MCF 10A (cell line): ENCODE measurements at regions of chr3 and their contacts with region 1.

Region 1: DNA sequence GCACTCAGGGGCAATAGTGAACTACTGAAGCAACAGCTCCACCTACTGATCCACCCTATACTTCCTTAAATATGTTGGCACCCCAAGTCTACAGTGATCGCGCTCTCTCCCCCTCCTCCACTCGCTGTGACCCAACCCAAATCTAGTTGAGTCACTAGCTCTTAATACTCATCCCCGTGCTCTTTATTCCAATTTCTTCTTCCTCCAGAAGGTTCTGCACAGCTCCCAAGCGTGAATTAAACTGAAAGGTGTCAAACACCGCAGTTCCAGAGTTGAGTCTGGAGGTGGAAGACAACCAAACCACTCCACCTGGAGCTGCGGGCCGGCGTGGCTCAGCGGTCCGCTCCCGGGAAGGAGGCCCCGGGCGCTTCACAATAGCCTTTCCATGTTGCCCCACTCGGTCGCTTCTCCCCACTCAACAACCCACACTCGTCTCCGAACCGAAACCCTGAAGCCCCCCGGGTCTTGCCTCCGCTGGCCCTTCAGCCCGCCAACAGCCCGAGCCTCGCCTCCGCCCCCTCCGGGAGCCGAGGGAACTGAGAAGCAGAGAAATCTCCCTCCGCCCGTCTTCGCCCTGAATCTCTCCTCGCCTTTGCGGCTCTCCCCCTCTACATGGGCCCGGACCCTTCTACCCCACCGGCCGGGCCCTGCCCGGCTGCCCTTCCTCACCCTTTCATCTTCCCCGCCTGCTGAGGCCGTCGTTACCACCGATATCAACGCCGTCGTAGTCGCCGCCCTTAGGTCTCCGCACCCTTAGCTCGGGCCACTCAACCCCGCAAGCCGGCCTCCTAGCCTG is 578 bp downstream of the NAA50 start:
- DNase-seq: peak; percentile 95
- H3K4me3 Mint-ChIP-seq: peak overlapping the region; percentile 94
- H3K27ac Mint-ChIP-seq: peak overlapping the region; percentile 100
- H3K4me1 Mint-ChIP-seq: peaks cover 49% of the 10 kb centered on the region
- H3K27me3 Mint-ChIP-seq: no peaks in the 10 kb centered on the region
- CTCF ChIP-seq: peak; percentile 39

Region 2: DNA sequence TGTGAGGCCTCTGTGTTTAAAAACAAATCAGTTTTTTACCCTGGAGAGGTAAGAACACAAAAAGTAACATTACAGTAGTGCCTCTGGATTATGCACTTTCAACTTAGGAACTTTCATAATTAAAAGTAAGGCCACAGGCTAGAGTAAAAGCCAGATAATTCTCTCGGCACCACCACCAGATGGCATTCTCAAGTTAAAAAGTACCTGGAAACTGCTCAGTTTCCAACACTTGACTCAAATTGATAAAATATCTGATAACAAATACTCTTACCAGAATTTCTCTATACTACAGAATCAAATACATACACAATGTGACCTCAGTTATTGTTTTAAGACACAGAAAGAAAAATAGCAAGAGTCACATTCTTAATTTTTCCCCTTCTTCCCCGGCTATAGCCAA is 250.4 kb before region 1 on chr3:
- CTCF ChIA-PET with region 1: interaction called, 22 read pairs
- POLR2A ChIA-PET with region 1: interaction called, 8 read pairs
- intact Hi-C with region 1: loop called (anchors 1 kb)
- DNase-seq: peak; percentile 39
- H3K4me3 Mint-ChIP-seq: no peak overlapping the region
- H3K27ac Mint-ChIP-seq: no peak overlapping the region
- H3K4me1 Mint-ChIP-seq: no peaks in the 10 kb centered on the region
- H3K27me3 Mint-ChIP-seq: no peaks in the 10 kb centered on the region
- CTCF ChIP-seq: peak; percentile 39

Region 3: GRCh38 chr3:113575206-113575605 is 170.3 kb before region 1 on chr3:
- CTCF ChIA-PET with region 1: interaction called, 8 read pairs
- POLR2A ChIA-PET with region 1: interaction called, 3 read pairs
- intact Hi-C with region 1: loop called (anchors 2 kb)
- DNase-seq: no peak
- H3K4me3 Mint-ChIP-seq: no peak overlapping the region
- H3K27ac Mint-ChIP-seq: no peak overlapping the region
- H3K4me1 Mint-ChIP-seq: no peaks in the 10 kb centered on the region
- H3K27me3 Mint-ChIP-seq: peaks cover 27% of the 10 kb centered on the region
- CTCF ChIP-seq: no peak

Region 4: GRCh38 chr3:113696658-113697499 is 48.6 kb before region 1 on chr3:
- CTCF ChIA-PET with region 1: interaction called, 17 read pairs
- POLR2A ChIA-PET with region 1: interaction called, 116 read pairs
- intact Hi-C with region 1: loop called (anchors 1 kb)
- DNase-seq: peak; percentile 99
- H3K4me3 Mint-ChIP-seq: no peak overlapping the region
- H3K27ac Mint-ChIP-seq: no peak overlapping the region
- H3K4me1 Mint-ChIP-seq: peaks cover 22% of the 10 kb centered on the region
- H3K27me3 Mint-ChIP-seq: no peaks in the 10 kb centered on the region
- CTCF ChIP-seq: no peak

Region 5: GRCh38 chr3:113795693-113796092 is 50.2 kb after region 1 on chr3:
- CTCF ChIA-PET with region 1: interaction called, 10 read pairs
- POLR2A ChIA-PET with region 1: interaction called, 4 read pairs
- intact Hi-C with region 1: no loop called
- DNase-seq: no peak
- H3K4me3 Mint-ChIP-seq: no peak overlapping the region
- H3K27ac Mint-ChIP-seq: no peak overlapping the region
- H3K4me1 Mint-ChIP-seq: no peaks in the 10 kb centered on the region
- H3K27me3 Mint-ChIP-seq: no peaks in the 10 kb centered on the region
- CTCF ChIP-seq: no peak

Region 6: GRCh38 chr3:113844622-113845222 is 99.3 kb after region 1 on chr3:
- CTCF ChIA-PET with region 1: interaction called, 11 read pairs
- POLR2A ChIA-PET with region 1: no interaction called
- intact Hi-C with region 1: no loop called
- DNase-seq: peak; percentile 65
- H3K4me3 Mint-ChIP-seq: no peak overlapping the region
- H3K27ac Mint-ChIP-seq: no peak overlapping the region
- H3K4me1 Mint-ChIP-seq: no peaks in the 10 kb centered on the region
- H3K27me3 Mint-ChIP-seq: no peaks in the 10 kb centered on the region
- CTCF ChIP-seq: peak; percentile 36